A549 (cell line): ENCODE measurements at regions of chr11 and their contacts with region 1.

Region 1: DNA sequence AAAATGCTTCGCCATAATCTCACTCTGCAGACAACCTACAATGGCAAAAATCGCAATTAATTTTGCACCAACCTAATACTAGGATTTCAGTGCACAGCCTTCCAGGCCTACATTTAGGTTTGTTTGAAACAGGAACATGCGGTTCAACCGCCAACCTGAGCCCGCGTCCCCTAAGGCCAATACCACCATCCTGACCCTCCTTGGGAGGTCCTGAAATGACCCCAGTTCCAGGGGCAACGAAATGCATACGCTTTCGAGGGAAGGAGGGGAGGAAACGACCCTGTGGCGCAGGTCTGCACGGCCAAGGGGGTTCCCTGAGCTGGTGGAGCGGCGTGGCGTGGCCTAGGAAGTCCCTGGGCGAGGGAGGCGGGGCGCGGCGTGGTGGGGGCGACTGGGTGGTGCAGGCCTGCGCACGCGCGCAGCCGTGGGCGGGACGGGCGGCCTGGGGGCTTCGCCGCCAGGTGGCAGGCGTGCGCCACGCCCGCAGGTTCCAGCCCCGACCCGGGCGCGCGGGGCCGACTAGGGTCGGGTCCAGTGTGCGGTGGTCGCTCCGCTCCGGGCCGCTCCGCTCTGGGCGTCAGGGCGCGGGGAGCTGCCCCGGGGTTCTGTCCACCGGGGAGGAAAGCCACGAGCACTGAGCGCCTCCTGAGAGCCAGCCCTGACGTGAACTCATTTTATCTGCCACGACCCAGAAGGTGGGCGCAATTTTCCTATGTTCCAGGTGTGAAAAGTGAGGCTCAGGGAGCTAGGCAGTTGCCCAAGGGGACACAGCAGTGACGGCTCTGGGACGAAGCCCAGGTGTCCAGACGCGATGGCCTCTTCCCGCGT is 94.1 kb downstream of the SWAP70 start:
- DNase-seq: peak; percentile 83 to 92
- ATAC-seq: peak; percentile 37 to 79
- H3K4me3 ChIP-seq: peak overlapping the region; percentile 70
- H3K27ac ChIP-seq: peak overlapping the region; percentile 95 to 98
- H3K4me1 ChIP-seq: peaks cover 43% of the 10 kb centered on the region
- CTCF ChIP-seq: peak; percentile 92
- EP300 ChIP-seq: no peak
- POLR2A ChIP-seq: peak; percentile 82
- RAD21 ChIP-seq: peak; percentile 70 to 99; a peak in 4 of 5 replicates

Region 2: DNA sequence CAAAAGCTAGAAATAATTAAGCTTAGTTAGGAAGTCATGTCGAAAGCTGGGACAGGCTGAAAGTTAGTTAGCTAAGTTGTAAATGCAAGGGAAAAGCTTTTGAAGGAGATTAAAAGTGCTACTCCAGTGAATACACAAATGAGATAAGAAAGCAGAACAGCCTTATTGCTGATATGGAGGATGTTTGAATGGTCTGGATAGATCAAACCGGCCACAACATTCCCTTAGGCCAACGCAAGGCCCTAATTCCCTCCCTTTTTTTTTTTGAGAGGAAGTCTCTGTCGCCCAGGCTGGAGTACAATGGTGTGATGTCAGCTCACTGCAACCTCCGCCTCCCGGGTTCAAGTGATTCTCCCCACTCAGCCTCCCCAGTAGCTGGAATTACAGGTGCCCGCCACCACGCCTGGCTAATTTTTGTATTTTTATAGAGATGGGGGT is 207.8 kb before region 1 on chr11:
- CTCF ChIA-PET with region 1: no interaction called
- POLR2A ChIA-PET with region 1: no interaction called
- DNase-seq: no peak
- ATAC-seq: no peak
- H3K4me3 ChIP-seq: no peak overlapping the region
- H3K27ac ChIP-seq: no peak overlapping the region
- H3K4me1 ChIP-seq: no peaks in the 10 kb centered on the region
- CTCF ChIP-seq: no peak
- EP300 ChIP-seq: no peak
- POLR2A ChIP-seq: no peak
- RAD21 ChIP-seq: no peak

Region 3: GRCh38 chr11:9681583-9682372 is 76.2 kb before region 1 on chr11:
- CTCF ChIA-PET with region 1: no interaction called
- POLR2A ChIA-PET with region 1: no interaction called
- DNase-seq: no peak
- ATAC-seq: peak in 1 of 2 experiments; percentile 27; a peak in 2 of 6 replicates
- H3K4me3 ChIP-seq: no peak overlapping the region
- H3K27ac ChIP-seq: no peak overlapping the region
- H3K4me1 ChIP-seq: no peaks in the 10 kb centered on the region
- CTCF ChIP-seq: no peak
- EP300 ChIP-seq: no peak
- POLR2A ChIP-seq: no peak
- RAD21 ChIP-seq: no peak

Region 4: DNA sequence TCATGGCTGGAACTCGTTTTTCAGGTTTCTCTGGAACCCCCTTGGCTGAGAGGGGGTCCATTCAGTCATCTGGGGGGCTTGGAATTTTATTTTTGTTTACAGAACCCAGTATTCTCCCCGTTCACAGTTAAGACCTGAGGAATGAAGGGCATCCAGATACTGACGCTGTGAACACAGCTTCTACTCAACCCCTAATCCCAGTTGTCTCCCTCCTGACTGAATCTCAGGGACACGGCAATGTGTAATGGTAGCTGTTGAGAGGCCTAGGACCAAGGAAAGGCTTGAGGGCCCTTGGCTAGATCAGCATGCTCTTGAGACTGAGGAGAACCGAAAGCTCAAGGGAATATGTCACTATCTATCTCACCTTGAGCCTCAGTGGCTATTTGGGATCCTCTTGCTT is 19.5 kb after region 1 on chr11:
- CTCF ChIA-PET with region 1: interaction called, 11 read pairs
- POLR2A ChIA-PET with region 1: no interaction called
- DNase-seq: no peak
- ATAC-seq: no peak
- H3K4me3 ChIP-seq: no peak overlapping the region
- H3K27ac ChIP-seq: no peak overlapping the region
- H3K4me1 ChIP-seq: peaks cover 31% of the 10 kb centered on the region
- CTCF ChIP-seq: no peak
- EP300 ChIP-seq: no peak
- POLR2A ChIP-seq: no peak
- RAD21 ChIP-seq: no peak

Region 5: GRCh38 chr11:9906043-9906791 is 148.2 kb after region 1 on chr11:
- CTCF ChIA-PET with region 1: interaction called, 12 read pairs
- POLR2A ChIA-PET with region 1: interaction called, 3 read pairs
- DNase-seq: peak; percentile 80 to 96
- ATAC-seq: peak; percentile 97 to 98
- H3K4me3 ChIP-seq: 0 out of 3 replicates have a peak overlapping the region, but pooled peaks have one; percentile 5
- H3K27ac ChIP-seq: peak overlapping the region; percentile 81 to 92
- H3K4me1 ChIP-seq: peaks cover 50% of the 10 kb centered on the region
- CTCF ChIP-seq: no peak
- EP300 ChIP-seq: peak; percentile 78 to 93; a peak in 4 of 5 replicates
- POLR2A ChIP-seq: no peak
- RAD21 ChIP-seq: peak; percentile 31 to 42; a peak in 3 of 5 replicates

Region 6: DNA sequence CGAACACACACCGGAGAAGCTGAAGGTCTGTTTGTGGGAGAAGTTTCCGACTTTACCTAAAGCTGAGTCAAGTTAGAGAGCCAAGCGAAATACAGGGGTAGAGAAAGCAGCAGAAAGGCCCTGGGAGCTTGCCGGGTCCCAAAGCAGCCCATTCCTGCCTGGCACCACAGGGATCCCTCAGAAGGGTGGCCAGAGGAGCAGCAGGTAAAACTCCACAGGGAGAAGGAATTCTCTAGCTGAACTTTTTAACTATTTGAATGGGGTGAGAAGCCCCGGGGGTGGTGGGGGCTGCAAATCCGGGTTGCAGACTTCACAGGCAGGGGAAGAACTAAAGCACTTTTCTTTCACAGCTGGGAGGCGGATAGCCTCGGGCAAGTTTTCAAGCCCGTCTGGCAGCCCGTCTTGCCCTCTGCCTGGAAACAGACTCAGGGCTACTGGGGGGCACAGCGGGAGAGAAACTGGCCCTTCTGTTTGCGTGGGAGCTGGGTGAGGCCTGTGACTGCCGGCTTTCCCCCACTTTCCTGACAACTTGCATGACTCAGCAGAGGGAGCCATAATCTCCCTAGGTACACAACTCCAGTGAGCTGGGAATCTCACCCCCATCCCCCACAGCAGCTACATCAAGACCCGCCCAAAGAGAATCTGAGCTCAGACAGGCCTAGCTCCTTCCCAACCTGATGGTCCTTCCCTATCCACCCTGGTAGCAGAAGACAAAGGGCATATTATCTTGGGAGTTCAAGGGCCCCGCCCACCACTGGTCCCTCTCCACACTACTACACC is 225.0 kb after region 1 on chr11:
- CTCF ChIA-PET with region 1: interaction called, 14 read pairs
- POLR2A ChIA-PET with region 1: interaction called, 10 read pairs
- DNase-seq: peak; percentile 32 to 97
- ATAC-seq: peak; percentile 83 to 91
- H3K4me3 ChIP-seq: peak overlapping the region; percentile 19; the same call in 1 of the 3 replicates
- H3K27ac ChIP-seq: peak overlapping the region; percentile 95
- H3K4me1 ChIP-seq: peaks cover 37% of the 10 kb centered on the region
- CTCF ChIP-seq: no peak
- EP300 ChIP-seq: peak in 1 of 2 experiments; percentile 77; a peak in 3 of 5 replicates
- POLR2A ChIP-seq: no peak
- RAD21 ChIP-seq: peak; percentile 33 to 55; a peak in 4 of 5 replicates

Region 7: GRCh38 chr11:10287140-10287539 is 529.1 kb after region 1 on chr11:
- CTCF ChIA-PET with region 1: no interaction called
- POLR2A ChIA-PET with region 1: no interaction called
- DNase-seq: no peak
- ATAC-seq: no peak
- H3K4me3 ChIP-seq: no peak overlapping the region
- H3K27ac ChIP-seq: no peak overlapping the region
- H3K4me1 ChIP-seq: peaks cover 29% of the 10 kb centered on the region
- CTCF ChIP-seq: no peak
- EP300 ChIP-seq: no peak
- POLR2A ChIP-seq: no peak
- RAD21 ChIP-seq: no peak

Region 8: GRCh38 chr11:10322830-10323792 is 565.1 kb after region 1 on chr11:
- CTCF ChIA-PET with region 1: interaction called, 38 read pairs
- POLR2A ChIA-PET with region 1: interaction called, 8 read pairs
- DNase-seq: peak; percentile 65 to 87
- ATAC-seq: peak; percentile 79 to 80
- H3K4me3 ChIP-seq: peak overlapping the region; percentile 3; the same call in 1 of the 3 replicates
- H3K27ac ChIP-seq: peak overlapping the region; percentile 73 to 84
- H3K4me1 ChIP-seq: peaks cover 65% of the 10 kb centered on the region
- CTCF ChIP-seq: peak; percentile 73
- EP300 ChIP-seq: no peak
- POLR2A ChIP-seq: no peak
- RAD21 ChIP-seq: peak; percentile 84 to 89